CD8-positive, alpha-beta T cell (primary cell): ENCODE measurements at regions of chr7 and their contacts with region 1.

Region 1: GRCh38 chr7:44065436-44066118 is at the start of gene PGAM2:
- DNase-seq: no peak
- ATAC-seq: peak; percentile 67
- H3K4me3 ChIP-seq: no peak within 1 kb of the TSS
- H3K4me3 Mint-ChIP-seq: no peak within 1 kb of the TSS
- H3K27ac ChIP-seq: no peak within 1 kb of the TSS
- H3K27ac Mint-ChIP-seq: peak within 1 kb of the TSS; percentile 74
- H3K4me1 ChIP-seq: peaks cover 34% of the 10 kb centered on the region
- H3K4me1 Mint-ChIP-seq: peaks cover 38% of the 10 kb centered on the region
- H3K27me3 ChIP-seq: no peaks in the 10 kb centered on the region
- H3K27me3 Mint-ChIP-seq: no peaks in the 10 kb centered on the region
- CTCF ChIP-seq: no peak
- total RNA-seq, gene PGAM2: 1.1 to 1.5 TPM

Region 2: DNA sequence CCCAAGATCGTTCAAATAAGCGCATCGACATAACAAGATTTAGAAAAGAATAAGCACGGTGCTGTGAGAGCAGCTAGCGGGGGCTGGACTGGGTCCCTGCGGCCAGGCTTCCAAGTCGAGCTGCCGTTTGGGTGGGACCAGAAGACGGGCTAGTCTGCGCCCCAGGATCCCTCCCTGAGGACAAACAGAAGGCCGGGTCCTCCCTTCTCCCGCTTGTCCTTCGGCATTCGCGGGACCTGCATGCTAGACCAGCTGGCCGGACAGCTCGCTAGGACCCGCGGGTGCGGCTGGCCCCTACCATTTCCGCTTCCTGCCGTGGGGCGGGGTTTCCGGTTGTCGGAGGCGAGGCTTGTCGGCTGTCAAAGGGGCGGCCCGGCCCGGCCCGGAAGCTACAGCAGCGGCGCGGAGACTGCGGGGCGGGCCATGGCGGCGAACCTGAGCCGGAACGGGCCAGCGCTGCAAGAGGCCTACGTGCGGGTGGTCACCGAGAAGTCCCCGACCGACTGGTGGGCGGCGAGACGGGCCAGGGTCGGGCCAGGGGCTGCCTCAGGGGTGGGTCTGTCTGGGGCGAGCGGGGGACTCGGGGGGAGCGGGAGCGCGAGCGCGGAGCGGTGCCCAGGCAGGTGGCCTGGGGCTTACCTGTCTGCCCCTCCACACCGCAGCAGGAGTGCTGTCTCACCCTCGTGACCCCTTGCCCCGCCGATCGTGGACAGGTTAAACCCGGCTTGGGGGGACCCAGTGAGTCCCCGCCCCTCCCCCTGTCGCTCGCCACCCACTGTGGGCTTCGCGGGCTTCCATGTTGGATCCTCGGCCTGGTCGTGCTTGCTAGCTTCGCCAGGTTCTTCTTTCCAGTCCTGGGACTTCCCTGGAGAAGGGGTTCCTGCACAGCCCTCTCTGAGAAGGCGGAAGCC is 21.0 kb before region 1 on chr7 and contains the start of gene DBNL:
- CTCF ChIA-PET with region 1: interaction called, 3 read pairs
- POLR2A ChIA-PET with region 1: interaction called, 62 read pairs
- intact Hi-C with region 1: no loop called
- DNase-seq: peak; percentile 66 to 95 (median 88)
- ATAC-seq: peak; percentile 48
- H3K4me3 ChIP-seq: peak within 1 kb of the TSS; percentile 76 to 78
- H3K4me3 Mint-ChIP-seq: peak within 1 kb of the TSS; percentile 91
- H3K27ac ChIP-seq: peak within 1 kb of the TSS; percentile 73 to 91
- H3K27ac Mint-ChIP-seq: peak within 1 kb of the TSS; percentile 97
- H3K4me1 ChIP-seq: peaks cover 49% of the 10 kb centered on the region
- H3K4me1 Mint-ChIP-seq: peaks cover 50% of the 10 kb centered on the region
- H3K27me3 ChIP-seq: no peaks in the 10 kb centered on the region
- H3K27me3 Mint-ChIP-seq: no peaks in the 10 kb centered on the region
- CTCF ChIP-seq: no peak
- total RNA-seq, gene DBNL: 82.1 to 84.8 TPM